Aorta (tissue), 5 donors: ENCODE measurements at regions of chr10 and their contacts with region 1.

Region 1: DNA sequence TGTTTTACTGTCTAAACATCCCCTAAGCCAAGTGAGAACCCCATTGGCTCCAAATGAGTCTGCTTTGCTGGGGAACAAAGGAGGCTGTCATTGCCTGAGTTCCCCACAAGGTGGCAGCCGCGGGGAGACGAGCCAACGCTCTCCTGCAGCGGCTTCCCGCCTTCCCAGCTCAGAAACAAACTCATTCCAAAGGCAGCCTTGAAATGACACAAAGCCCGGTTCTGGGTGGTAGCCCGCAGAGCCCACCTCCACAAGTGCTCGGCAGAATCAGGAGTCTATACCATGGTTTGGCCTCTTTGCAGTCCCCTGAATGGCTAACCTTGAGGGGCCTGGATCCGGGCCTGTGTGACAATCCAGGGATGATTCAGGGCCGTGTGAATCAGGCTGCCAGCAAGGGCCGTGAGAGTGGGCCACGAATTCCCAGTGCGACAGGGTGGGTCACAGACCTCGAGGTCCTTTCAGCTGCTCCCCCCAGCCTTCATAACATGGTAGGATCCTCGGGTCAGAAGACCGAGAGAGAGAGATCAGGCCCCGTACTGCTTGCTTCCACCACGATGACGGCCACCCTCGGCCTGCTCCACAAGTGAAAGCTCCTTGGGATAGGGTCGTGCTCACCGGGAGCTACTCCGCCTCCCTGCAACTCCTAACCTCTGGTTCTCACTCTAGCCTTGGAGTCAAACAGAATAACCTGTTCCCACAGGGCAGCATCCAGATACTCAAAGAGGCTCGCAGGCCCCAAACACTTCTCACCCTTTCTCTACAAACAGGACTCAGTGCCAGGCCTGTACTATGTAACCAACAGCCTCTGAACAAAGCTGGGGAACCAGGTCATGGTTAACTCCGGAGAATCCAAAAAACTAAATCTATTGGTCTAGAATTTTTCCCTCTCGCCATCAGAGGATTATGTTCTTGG is 79.6 kb downstream of the DLG5 start:
- DNase-seq: peak; percentile 76 to 92
- ATAC-seq: peak; percentile 85
- H3K4me3 ChIP-seq: no peak overlapping the region
- H3K27ac ChIP-seq: peak overlapping the region in 1 of 2 donors; percentile 2
- H3K4me1 ChIP-seq: no peaks in the 10 kb centered on the region
- H3K27me3 ChIP-seq: no peaks in the 10 kb centered on the region

Region 2: GRCh38 chr10:77970869-77971803 is 124.2 kb after region 1 on chr10:
- intact Hi-C with region 1: loop called in 1 of 2 experiments (anchors 2 kb)
- DNase-seq: peak; percentile 82 to 86
- ATAC-seq: peak; percentile 87
- H3K4me3 ChIP-seq: no peak overlapping the region
- H3K27ac ChIP-seq: peak overlapping the region; percentile 9 to 53
- H3K4me1 ChIP-seq: peaks cover 3% of the 10 kb centered on the region in 2 donors
- H3K27me3 ChIP-seq: no peaks in the 10 kb centered on the region

Region 3: DNA sequence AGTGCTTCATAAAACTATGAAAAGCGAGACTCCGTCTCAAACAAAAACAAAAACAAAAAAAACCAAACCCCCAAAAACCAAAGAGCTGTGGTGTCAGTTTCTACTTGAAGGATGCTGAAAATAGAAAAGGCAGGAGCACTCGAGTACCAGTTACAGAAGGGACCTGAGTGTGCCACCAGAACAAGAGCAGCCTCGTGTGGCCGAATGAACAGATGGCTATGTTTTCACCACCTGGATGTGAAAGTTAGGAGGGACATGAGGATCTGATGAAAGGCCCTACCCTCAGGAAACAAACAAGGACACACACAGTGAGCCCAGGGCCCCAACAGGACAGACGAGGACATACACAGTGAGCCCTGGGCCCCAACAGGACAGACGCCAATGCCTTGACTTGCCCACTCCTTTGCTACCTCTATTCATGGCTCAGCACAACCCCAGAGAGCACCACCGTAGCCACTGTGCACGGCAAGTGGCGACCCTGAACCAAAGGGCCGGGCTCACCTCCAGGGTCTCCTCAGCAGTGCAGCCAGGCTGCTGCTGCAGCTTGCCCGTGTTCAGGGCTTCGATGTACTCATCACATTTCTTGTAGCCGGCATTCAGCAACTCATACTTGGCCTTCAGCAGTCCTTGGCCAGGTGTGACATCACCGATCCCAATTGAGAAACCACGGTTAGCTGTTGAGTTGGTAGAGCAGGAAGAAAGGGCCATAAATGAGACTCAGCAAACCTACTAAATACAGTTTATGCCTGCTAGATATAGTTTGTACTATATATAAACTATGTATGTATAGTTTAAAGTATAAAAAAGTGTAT is 157.4 kb after region 1 on chr10:
- intact Hi-C with region 1: loop called in 1 of 2 experiments (anchors 5 kb)
- DNase-seq: no peak
- ATAC-seq: no peak
- H3K4me3 ChIP-seq: no peak overlapping the region
- H3K27ac ChIP-seq: no peak overlapping the region
- H3K4me1 ChIP-seq: no peaks in the 10 kb centered on the region
- H3K27me3 ChIP-seq: no peaks in the 10 kb centered on the region

Region 4: GRCh38 chr10:78029269-78030226 is 182.6 kb after region 1 on chr10 and contains the start of gene POLR3A:
- intact Hi-C with region 1: loop called (anchors 2 to 5 kb)
- DNase-seq: peak; percentile 98
- ATAC-seq: peak; percentile 89
- H3K4me3 ChIP-seq: peak within 1 kb of the TSS; percentile 55 to 70
- H3K27ac ChIP-seq: peak within 1 kb of the TSS; percentile 30 to 37
- H3K4me1 ChIP-seq: peaks cover 0 to 7% of the 10 kb centered on the region in 2 donors
- H3K27me3 ChIP-seq: no peaks in the 10 kb centered on the region
- total RNA-seq, gene POLR3A: 11.6 to 16.3 TPM